BJ (cell line): ENCODE measurements at regions of chr3 and their contacts with region 1.

Region 1: GRCh38 chr3:170397579-170398177 is 21.0 kb upstream of the CLDN11 start:
- DNase-seq: no peak
- H3K4me3 ChIP-seq: no peak overlapping the region
- H3K27me3 ChIP-seq: no peaks in the 10 kb centered on the region
- CTCF ChIP-seq: no peak

Region 2: GRCh38 chr3:170372190-170372879 is 25.3 kb before region 1 on chr3:
- CTCF ChIA-PET with region 1: interaction called, 3 read pairs
- POLR2A ChIA-PET with region 1: interaction called, 15 read pairs
- DNase-seq: no peak
- H3K4me3 ChIP-seq: no peak overlapping the region
- H3K27me3 ChIP-seq: no peaks in the 10 kb centered on the region
- CTCF ChIP-seq: no peak

Region 3: DNA sequence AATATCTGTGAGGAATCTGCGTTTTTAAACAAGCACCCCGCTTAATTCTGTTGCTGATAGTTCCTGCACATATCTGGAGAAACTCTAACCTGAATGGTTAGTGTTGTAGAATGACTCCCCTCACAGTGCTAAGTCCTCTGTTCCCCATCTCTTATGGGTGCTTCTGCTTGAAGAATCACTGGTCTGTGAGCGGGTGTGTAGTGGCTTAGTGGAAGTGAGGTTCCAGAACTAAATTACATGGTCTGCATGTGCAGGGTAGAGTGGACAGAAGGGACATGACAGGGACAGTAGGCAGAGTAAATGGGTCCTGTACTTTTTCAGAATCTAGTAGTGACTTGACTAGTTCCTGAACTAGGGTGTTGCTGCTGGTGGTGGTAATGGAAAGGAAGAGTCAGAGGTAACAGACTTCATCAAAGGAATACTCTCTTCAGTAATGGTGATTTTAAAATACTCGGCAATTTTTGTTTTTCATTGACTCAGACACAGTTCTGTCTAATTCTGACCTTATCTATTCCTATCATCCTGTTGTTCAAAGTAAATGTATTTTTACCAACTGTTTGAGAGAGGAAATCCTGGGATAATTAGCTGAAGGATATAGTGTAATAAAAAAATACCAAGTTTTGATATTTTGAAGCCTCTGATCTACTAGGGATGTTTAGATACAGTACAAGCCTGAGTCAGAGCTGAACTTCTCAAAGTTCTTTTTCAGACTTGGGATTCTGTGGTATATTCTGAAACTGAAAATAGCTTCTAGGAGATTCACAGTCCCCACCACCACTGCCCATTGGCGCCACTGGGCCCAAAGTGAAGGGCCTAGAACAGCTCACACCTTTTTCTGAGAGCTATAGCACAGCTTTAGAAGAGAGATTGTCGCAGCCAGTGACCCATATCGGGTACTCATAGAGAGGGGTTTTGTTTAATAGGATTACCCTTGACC is 1697.2 kb after region 1 on chr3:
- CTCF ChIA-PET with region 1: no interaction called
- POLR2A ChIA-PET with region 1: no interaction called
- DNase-seq: no peak
- H3K4me3 ChIP-seq: no peak overlapping the region
- H3K27me3 ChIP-seq: no peaks in the 10 kb centered on the region
- CTCF ChIP-seq: 0 out of 2 replicates have a peak, but pooled peaks have one; percentile 6